ENCODE measurements at regions of chr3 and their contacts with region 1.

Region 1: DNA sequence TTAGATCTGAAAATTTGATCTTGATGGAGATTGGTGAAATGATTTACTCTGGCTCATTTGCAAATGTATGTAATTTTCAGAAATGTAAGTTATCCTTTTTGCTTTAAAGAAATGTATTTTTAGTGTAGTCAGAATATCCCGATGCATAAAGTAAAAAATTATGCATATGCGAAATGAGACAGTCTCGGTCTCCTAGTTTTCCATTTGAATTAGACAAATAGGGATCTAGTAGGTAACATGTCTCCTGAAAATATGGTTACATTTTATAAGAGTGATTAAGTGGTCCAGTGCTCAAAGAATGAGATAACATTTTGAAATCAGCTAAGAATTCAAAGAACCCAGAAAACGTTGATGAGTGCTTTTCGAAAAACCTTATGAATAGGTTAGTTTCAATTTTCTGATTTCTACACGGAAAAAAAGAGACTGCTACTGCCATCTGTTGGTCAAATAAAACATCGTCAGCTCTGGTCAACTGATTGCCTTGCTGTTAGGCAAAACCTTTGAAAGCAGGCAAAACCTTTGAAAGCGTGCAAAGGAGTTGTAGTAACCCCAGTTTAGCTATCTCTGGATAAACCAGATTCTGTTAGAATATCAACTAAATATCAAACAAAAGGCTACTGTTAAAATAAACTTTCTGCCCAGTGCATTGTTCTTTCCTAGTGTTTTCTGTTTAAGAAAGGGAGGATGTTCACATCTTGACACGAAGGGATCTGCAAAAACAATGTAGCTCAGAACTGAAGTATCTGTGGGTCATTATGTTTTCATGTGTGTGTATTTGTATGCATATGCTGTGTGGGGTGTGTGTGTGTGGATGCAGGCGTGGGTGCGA is 59.3 kb upstream of the CHMP2B start:
- DNase-seq: no peak
- ATAC-seq: no peak
- H3K4me3 ChIP-seq: peak overlapping the region; percentile 48
- H3K27ac ChIP-seq: no peak overlapping the region
- H3K4me1 ChIP-seq: no peaks in the 10 kb centered on the region
- H3K27me3 ChIP-seq: no peaks in the 10 kb centered on the region

Region 2: GRCh38 chr3:86774082-86774691 is 393.7 kb before region 1 on chr3:
- intact Hi-C with region 1: loop called (anchors 5 to 10 kb)
- DNase-seq: no peak
- ATAC-seq: no peak
- H3K4me3 ChIP-seq: no peak overlapping the region
- H3K27ac ChIP-seq: no peak overlapping the region
- H3K4me1 ChIP-seq: no peaks in the 10 kb centered on the region
- H3K27me3 ChIP-seq: no peaks in the 10 kb centered on the region